ENCODE measurements at regions of chr15 and their contacts with region 1.

Region 1: DNA sequence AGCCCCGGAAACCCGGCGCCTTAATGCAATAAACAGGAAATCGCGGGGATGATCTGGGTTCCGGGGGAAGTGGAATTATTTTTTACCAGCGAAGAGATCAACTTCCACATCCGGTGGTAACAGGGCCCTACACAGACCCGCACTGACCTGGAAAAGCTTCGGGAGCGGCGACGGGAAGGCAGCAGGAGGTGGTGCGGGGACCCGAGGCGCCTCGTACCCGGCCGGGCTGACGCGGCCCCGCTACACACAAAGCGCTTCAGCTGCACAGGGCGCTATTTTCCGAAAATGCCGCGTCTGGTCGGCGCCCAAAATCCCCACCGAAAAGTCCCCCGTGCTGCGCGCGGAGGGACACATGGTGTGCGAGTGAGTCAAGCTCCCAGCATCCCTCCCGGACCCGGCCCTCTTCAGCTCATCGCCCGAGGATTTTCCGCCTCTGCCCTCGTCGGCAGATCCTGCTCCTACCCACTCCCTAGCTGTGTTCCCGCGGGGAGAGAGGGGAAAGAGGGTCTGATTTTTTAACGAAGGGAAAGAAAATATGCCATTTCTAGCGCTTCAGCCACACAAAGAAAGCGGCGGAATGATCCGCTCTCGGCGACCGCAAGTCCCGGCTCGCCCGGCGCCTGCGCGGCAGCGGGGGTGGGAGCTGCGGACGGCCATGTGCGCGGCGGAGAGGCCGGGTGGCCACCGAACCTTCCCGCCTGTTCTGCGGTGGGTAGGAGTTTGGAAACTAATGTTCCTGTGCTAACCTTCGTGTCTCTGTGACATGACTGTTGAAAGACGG is at the start of gene GABPB1:
- DNase-seq: peak; percentile 71 to 95 (median 84)
- ATAC-seq: peak; percentile 44
- H3K4me3 ChIP-seq: peak within 1 kb of the TSS; percentile 97
- H3K4me3 Mint-ChIP-seq: peak within 1 kb of the TSS; percentile 97
- H3K27ac ChIP-seq: peak within 1 kb of the TSS; percentile 99 to 100
- H3K27ac Mint-ChIP-seq: peak within 1 kb of the TSS; percentile 100
- H3K4me1 ChIP-seq: peaks cover 37% of the 10 kb centered on the region
- H3K4me1 Mint-ChIP-seq: peaks cover 73% of the 10 kb centered on the region
- H3K27me3 ChIP-seq: no peaks in the 10 kb centered on the region
- H3K27me3 Mint-ChIP-seq: peaks cover 19% of the 10 kb centered on the region
- CTCF ChIP-seq: no peak
- total RNA-seq, gene GABPB1: 25.7 to 27.1 TPM

Region 2: GRCh38 chr15:49046220-49047102 is 1308.6 kb before region 1 on chr15 and contains the start of gene SECISBP2L:
- CTCF ChIA-PET with region 1: no interaction called
- POLR2A ChIA-PET with region 1: interaction called, 3 read pairs
- intact Hi-C with region 1: loop called in 1 of 2 experiments (anchors 10 kb)
- DNase-seq: peak; percentile 79 to 95 (median 84)
- ATAC-seq: peak; percentile 95
- H3K4me3 ChIP-seq: peak within 1 kb of the TSS; percentile 66
- H3K4me3 Mint-ChIP-seq: peak within 1 kb of the TSS; percentile 98
- H3K27ac ChIP-seq: peak within 1 kb of the TSS; percentile 5 to 52
- H3K27ac Mint-ChIP-seq: peak within 1 kb of the TSS; percentile 92
- H3K4me1 ChIP-seq: peaks cover 11% of the 10 kb centered on the region
- H3K4me1 Mint-ChIP-seq: peaks cover 42% of the 10 kb centered on the region
- H3K27me3 ChIP-seq: no peaks in the 10 kb centered on the region
- H3K27me3 Mint-ChIP-seq: no peaks in the 10 kb centered on the region
- CTCF ChIP-seq: no peak
- total RNA-seq, gene SECISBP2L: 55.9 to 56.0 TPM

Region 3: DNA sequence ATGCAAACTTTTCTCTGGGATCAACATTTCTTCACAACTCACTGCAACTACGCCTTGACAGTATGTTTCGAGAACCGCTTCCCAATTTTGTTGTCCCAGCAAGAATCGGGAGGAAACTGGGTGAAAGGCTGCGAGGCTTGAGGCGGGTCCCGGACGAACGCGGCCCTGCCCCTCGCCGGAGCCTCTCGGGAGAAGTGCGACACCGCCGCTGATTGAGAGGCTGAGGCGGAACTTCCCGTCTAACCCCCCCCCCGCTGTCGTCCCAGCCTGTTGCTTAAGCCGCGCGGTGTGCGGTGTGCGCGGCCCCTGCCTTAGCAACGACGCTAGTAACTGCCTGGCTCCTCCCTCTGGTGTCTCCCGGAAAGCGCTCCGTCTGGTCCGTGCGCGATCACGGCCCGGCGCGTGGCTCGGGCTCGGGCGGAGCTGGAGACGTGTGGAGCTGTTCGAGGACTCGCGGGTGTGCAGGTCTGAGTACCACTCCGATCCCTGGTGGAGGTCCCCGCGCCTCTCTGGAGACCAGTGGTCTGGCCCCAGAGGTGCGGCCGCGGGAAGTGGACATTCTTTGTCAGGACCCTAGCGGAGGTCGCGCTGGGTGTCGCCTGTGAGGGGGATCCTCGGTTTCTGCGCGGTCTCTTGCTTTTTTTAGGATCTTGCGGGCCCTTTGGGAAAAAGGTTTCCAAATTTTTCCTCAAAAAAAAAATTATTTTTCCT is 734.2 kb before region 1 on chr15 and contains the starts of genes DTWD1 and FAM227B:
- CTCF ChIA-PET with region 1: no interaction called
- POLR2A ChIA-PET with region 1: interaction called, 7 read pairs
- intact Hi-C with region 1: loop called (anchors 2 to 5 kb)
- DNase-seq: peak; percentile 85 to 98 (median 92)
- ATAC-seq: peak; percentile 96
- H3K4me3 ChIP-seq: peak within 1 kb of the TSS; percentile 77
- H3K4me3 Mint-ChIP-seq: peak within 1 kb of the TSS; percentile 99
- H3K27ac ChIP-seq: peak within 1 kb of the TSS; percentile 64 to 75
- H3K27ac Mint-ChIP-seq: peak within 1 kb of the TSS; percentile 97
- H3K4me1 ChIP-seq: peaks cover 9% of the 10 kb centered on the region
- H3K4me1 Mint-ChIP-seq: peaks cover 54% of the 10 kb centered on the region
- H3K27me3 ChIP-seq: no peaks in the 10 kb centered on the region
- H3K27me3 Mint-ChIP-seq: no peaks in the 10 kb centered on the region
- CTCF ChIP-seq: no peak
- total RNA-seq, gene DTWD1: 10.1 to 10.2 TPM
- total RNA-seq, gene FAM227B: 3.0 to 4.4 TPM

Region 4: DNA sequence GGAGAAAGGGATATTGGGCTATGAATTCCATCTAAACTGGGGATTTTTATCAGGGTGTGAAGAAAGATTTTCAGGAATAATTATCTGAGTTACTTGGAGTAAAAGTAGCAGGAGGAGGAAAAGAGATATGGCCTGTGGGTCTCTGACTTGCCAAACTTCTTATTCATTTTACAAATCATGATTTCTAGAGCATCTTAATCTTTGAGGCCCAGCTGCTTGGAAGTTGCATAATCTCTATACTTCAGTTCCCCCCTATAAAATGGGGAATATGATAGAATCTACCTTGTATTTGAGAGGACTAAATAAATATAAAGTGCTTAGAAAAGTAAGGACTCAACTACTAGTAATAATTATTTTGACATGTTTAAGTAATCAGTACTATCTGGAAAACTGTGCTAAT is 10.9 kb after region 1 on chr15:
- CTCF ChIA-PET with region 1: no interaction called
- POLR2A ChIA-PET with region 1: interaction called, 10 read pairs
- intact Hi-C with region 1: no loop called
- DNase-seq: no peak
- ATAC-seq: no peak
- H3K4me3 ChIP-seq: no peak overlapping the region
- H3K4me3 Mint-ChIP-seq: no peak overlapping the region
- H3K27ac ChIP-seq: no peak overlapping the region
- H3K27ac Mint-ChIP-seq: peak overlapping the region; percentile 17
- H3K4me1 ChIP-seq: peaks cover 3% of the 10 kb centered on the region
- H3K4me1 Mint-ChIP-seq: peaks cover 18% of the 10 kb centered on the region
- H3K27me3 ChIP-seq: no peaks in the 10 kb centered on the region
- H3K27me3 Mint-ChIP-seq: no peaks in the 10 kb centered on the region
- CTCF ChIP-seq: no peak

Region 5: DNA sequence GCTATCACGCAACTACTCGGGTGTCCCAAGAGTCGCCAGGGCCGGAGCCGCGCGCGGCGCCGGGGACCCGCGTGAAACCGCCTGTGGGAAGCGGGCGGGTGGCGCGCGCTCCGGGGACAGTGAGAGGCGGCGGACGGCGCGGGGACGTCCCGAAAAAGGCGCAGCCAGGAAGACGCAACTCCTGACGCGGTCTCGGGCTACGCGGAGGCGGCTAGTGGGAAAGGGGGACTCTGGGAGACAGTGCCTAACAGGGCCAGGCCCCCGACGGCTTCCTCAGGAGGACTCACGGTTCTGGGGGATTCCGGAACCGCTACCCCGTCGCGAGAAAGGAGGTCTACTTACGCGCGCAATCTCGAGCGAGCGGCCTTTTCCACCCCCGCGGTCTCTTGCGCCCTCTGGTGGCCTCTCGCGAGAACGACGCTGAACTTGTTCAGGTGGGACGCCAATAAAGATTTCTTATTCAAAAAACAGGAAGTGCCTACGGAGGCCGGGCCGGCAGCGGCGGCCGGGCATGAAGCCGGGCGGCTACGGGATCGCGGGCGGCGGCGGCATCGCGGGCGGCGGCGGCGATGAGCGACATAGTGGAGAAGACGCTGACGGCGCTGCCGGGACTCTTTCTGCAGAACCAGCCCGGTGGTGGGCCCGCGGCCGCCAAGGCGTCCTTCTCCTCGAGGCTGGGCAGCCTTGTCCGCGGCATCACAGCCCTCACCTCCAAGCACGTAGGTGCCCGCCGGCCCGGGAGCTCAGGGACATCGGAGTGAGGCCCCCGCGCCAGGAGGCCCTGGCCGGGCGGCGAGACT is 553.4 kb after region 1 on chr15 and contains the start of gene AP4E1:
- CTCF ChIA-PET with region 1: no interaction called
- POLR2A ChIA-PET with region 1: interaction called, 15 read pairs
- intact Hi-C with region 1: loop called (anchors 2 to 5 kb)
- DNase-seq: peak; percentile 89 to 97 (median 93)
- ATAC-seq: peak; percentile 40
- H3K4me3 ChIP-seq: peak within 1 kb of the TSS; percentile 80
- H3K4me3 Mint-ChIP-seq: peak within 1 kb of the TSS; percentile 94
- H3K27ac ChIP-seq: peak within 1 kb of the TSS; percentile 91 to 100
- H3K27ac Mint-ChIP-seq: peak within 1 kb of the TSS; percentile 98
- H3K4me1 ChIP-seq: peaks cover 19% of the 10 kb centered on the region
- H3K4me1 Mint-ChIP-seq: peaks cover 29% of the 10 kb centered on the region
- H3K27me3 ChIP-seq: no peaks in the 10 kb centered on the region
- H3K27me3 Mint-ChIP-seq: no peaks in the 10 kb centered on the region
- CTCF ChIP-seq: peak; percentile 87
- total RNA-seq, gene AP4E1: 6.3 to 6.6 TPM